ENCODE measurements at regions of chr1 and their contacts with region 1.

Region 1: GRCh38 chr1:116139592-116140134 is 28.5 kb downstream of the MAB21L3 start:
- DNase-seq: no peak
- ATAC-seq: no peak
- H3K4me3 ChIP-seq: no peak overlapping the region
- H3K4me3 Mint-ChIP-seq: no peak overlapping the region
- H3K27ac ChIP-seq: no peak overlapping the region
- H3K27ac Mint-ChIP-seq: no peak overlapping the region
- H3K4me1 ChIP-seq: peaks cover 8% of the 10 kb centered on the region
- H3K4me1 Mint-ChIP-seq: peaks cover 6% of the 10 kb centered on the region
- H3K27me3 ChIP-seq: no peaks in the 10 kb centered on the region
- H3K27me3 Mint-ChIP-seq: no peaks in the 10 kb centered on the region
- CTCF ChIP-seq: no peak

Region 2: DNA sequence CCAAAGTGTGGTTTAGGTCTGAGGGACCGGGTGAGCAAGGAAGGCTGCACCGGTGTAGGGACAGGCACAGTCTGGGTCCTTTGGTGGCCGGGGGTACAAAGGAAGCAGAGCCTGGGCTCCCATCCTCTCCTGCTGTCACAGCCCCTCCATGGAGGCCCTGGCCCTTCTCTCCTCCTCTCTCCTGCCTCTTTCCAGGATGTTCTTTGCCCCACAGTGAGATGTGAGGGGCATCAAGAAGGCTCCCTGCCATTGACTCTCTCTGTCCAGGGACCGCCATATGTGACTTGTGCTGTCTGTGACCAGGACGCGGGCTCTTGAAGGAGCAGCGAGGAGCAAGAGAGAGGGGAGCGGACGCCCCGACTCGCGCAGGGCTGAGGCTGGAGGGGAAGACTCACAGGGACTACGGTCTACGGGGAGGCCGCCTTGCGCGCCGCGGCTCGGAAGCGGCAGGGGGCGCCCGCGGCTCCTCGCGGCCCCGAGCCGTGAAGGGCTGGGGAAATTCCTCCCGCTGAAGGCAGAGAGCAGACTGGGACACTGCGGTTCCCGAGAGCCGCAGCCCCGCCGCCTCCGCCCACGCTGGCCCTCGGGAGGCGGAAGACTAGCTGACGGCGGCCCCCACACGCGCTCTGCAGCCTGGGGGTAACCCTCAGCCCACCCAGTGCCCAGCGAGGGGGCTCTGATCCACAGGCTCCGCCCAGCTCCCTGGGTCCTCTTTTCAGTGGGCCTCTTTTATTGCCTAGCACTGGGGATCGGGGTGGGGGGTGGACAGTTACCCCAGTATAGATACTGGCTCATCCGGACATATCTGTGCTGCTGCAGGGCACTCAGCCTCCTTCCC is 12.3 kb after region 1 on chr1:
- CTCF ChIA-PET with region 1: interaction called, 31 read pairs
- POLR2A ChIA-PET with region 1: interaction called, 4 read pairs
- intact Hi-C with region 1: no loop called
- DNase-seq: peak; percentile 51 to 93 (median 69)
- ATAC-seq: peak; percentile 89
- H3K4me3 ChIP-seq: peak overlapping the region; percentile 48
- H3K4me3 Mint-ChIP-seq: peak overlapping the region; percentile 81
- H3K27ac ChIP-seq: peak overlapping the region; percentile 45 to 69
- H3K27ac Mint-ChIP-seq: peak overlapping the region; percentile 91
- H3K4me1 ChIP-seq: peaks cover 22% of the 10 kb centered on the region
- H3K4me1 Mint-ChIP-seq: peaks cover 31% of the 10 kb centered on the region
- H3K27me3 ChIP-seq: no peaks in the 10 kb centered on the region
- H3K27me3 Mint-ChIP-seq: no peaks in the 10 kb centered on the region
- CTCF ChIP-seq: peak; percentile 86

Region 3: DNA sequence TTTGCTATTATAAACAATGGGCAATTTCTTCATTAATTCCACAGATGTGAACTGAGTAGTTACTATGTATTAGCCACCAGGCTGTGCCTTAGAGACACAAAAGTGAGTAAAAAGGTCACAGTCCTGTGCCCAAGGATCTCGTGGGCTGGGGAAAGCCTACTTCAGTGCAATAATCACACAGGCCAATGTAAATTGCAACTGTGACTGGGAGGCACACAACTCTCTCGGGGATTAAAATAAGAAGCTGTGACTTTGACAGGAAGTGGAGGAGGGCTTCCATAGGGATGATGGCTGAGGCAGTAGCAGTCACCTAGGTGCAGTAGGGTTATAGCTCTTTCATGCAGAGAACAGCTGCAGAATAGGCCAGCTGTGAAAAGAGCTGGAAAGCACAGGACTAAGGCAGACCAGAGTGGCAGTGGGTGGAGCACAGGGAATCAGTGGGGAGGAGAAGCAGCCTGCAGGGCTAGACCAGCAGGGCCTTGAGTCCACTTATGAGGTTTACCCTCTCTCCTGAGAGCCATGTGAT is 93.4 kb after region 1 on chr1:
- CTCF ChIA-PET with region 1: interaction called, 4 read pairs
- POLR2A ChIA-PET with region 1: interaction called, 4 read pairs
- intact Hi-C with region 1: loop called in 1 of 2 experiments (anchors 5 kb)
- DNase-seq: peak in 12 of 14 experiments; percentile 10 to 71 (median 21)
- ATAC-seq: peak; percentile 99
- H3K4me3 ChIP-seq: no peak overlapping the region
- H3K4me3 Mint-ChIP-seq: no peak overlapping the region
- H3K27ac ChIP-seq: no peak overlapping the region
- H3K27ac Mint-ChIP-seq: peak overlapping the region; percentile 2
- H3K4me1 ChIP-seq: peaks cover 15% of the 10 kb centered on the region
- H3K4me1 Mint-ChIP-seq: peaks cover 26% of the 10 kb centered on the region
- H3K27me3 ChIP-seq: no peaks in the 10 kb centered on the region
- H3K27me3 Mint-ChIP-seq: no peaks in the 10 kb centered on the region
- CTCF ChIP-seq: peak; percentile 64

Region 4: DNA sequence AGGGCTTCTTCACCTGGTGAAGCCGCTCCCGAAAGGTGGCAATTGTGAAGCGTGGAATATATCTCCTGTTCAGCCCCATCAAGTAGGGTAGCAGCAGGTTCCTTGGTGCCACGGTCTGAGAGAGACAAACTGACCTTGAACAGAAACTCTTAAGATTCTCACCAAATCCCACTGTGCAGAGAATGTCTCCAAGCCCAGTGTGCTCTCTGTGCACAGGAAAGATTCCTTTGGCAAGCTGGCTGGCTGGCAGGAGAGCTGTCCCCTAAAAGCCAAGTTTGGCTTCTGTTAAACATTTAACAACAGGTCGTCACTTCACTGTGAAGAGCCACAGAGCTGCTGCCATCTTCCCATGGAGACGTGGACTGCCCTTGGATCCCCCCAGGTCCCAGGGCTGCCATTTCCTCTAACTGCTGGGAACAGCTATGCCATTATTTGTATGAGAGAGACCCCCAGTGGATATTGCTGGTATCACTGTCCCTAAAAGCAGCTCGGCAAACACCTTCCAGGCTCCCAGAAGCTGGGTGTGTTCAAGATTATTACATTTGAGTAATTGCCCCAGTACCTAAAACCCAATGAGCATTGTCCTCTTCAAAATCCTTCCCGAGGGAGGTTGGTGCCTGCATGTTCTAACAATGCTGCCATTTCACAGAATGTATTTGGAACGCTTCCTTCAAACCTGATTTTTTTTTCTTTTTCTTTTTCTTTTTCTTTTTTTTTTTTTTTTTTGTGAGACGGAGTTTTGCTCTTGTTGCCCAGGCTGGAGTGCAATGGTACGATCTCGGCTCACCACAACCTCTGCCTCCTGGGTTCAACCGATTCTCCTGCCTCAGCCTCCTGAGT is 359.3 kb after region 1 on chr1:
- CTCF ChIA-PET with region 1: interaction called, 44 read pairs
- POLR2A ChIA-PET with region 1: interaction called, 21 read pairs
- intact Hi-C with region 1: loop called in 1 of 2 experiments (anchors 1 kb)
- DNase-seq: peak in 12 of 14 experiments; percentile 22 to 77 (median 31)
- ATAC-seq: peak; percentile 76
- H3K4me3 ChIP-seq: no peak overlapping the region
- H3K4me3 Mint-ChIP-seq: no peak overlapping the region
- H3K27ac ChIP-seq: no peak overlapping the region
- H3K27ac Mint-ChIP-seq: no peak overlapping the region
- H3K4me1 ChIP-seq: peaks cover 33% of the 10 kb centered on the region
- H3K4me1 Mint-ChIP-seq: peaks cover 27% of the 10 kb centered on the region
- H3K27me3 ChIP-seq: no peaks in the 10 kb centered on the region
- H3K27me3 Mint-ChIP-seq: no peaks in the 10 kb centered on the region
- CTCF ChIP-seq: peak; percentile 77